ENCODE measurements at regions of chr2 and their contacts with region 1.

Region 1: DNA sequence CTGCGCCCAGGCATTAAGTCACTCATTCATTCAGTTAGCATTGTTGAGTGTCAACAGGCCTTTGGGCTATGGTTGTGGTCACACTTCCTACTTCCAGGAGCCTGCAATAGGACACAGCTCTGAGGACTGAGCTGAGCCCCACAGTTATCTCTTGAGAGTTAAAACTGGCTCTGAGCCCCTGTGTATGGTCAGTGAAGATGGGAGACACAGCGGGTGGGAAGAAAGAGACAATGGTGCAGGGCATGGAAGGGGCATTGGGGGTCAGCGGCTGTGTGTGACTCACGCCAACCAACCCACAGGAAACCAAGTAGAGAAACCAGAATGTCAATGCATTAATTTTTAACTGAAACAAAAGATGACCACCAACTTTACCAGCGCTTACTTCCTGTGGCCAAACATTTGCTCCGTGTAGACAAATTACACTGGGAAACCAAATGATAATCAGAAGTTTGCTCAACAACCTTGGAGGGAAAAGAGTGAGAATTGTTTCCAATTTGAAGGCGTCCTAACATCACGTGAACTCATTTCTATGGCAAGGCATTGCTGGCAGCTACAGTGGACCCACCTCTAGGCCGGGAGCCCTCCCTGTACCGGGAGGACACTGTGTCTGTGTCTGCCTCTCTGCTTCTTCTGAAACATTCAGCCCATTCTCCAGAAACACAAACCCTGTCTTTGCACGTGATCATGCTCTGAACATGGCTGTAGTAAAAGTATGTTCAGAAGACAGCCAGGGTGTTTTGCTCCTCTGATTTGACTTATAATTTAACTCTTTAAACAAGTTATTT is 212.0 kb upstream of the ID2 start:
- DNase-seq: no peak
- H3K4me3 ChIP-seq: no peak overlapping the region
- H3K4me3 Mint-ChIP-seq: peak overlapping the region in 4 of 7 donors; percentile 12 to 51 (median 40)
- H3K27ac ChIP-seq: no peak overlapping the region
- H3K27ac Mint-ChIP-seq: peak overlapping the region in 6 of 8 donors; percentile 43 to 94 (median 84)
- H3K4me1 ChIP-seq: peaks cover 28% of the 10 kb centered on the region
- H3K4me1 Mint-ChIP-seq: peaks cover 57 to 67% (median 61%) of the 10 kb centered on the region in 3 donors
- H3K27me3 ChIP-seq: no peaks in the 10 kb centered on the region
- H3K27me3 Mint-ChIP-seq: peaks cover 0 to 2% of the 10 kb centered on the region in 2 donors

Region 2: DNA sequence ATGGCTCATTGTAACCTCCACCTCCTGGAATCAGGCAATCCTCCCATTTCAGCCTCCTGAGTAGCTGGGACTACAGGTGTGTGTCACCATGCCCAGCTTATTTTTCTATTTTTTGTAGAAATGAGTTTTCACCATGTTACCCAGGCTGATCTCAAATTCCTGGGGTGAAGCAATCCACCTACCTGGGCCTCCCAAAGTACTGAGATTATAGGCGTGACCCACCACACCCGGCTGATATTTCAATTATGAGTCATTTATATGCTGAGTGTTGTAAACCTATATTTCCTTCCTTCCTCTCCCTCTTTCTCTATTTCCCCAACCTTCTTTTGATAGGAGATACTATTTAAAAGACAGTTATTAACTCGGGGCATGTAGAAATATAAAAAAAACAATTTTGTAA is 257.7 kb before region 1 on chr2:
- CTCF ChIA-PET with region 1: no interaction called
- POLR2A ChIA-PET with region 1: interaction called, 10 read pairs
- DNase-seq: no peak
- H3K4me3 ChIP-seq: no peak overlapping the region
- H3K4me3 Mint-ChIP-seq: no peak overlapping the region
- H3K27ac ChIP-seq: no peak overlapping the region
- H3K27ac Mint-ChIP-seq: peak overlapping the region in 1 of 8 donors; percentile 32
- H3K4me1 ChIP-seq: no peaks in the 10 kb centered on the region
- H3K4me1 Mint-ChIP-seq: peaks cover 0 to 6% (median 4%) of the 10 kb centered on the region in 3 donors
- H3K27me3 ChIP-seq: no peaks in the 10 kb centered on the region
- H3K27me3 Mint-ChIP-seq: no peaks in the 10 kb centered on the region

Region 3: DNA sequence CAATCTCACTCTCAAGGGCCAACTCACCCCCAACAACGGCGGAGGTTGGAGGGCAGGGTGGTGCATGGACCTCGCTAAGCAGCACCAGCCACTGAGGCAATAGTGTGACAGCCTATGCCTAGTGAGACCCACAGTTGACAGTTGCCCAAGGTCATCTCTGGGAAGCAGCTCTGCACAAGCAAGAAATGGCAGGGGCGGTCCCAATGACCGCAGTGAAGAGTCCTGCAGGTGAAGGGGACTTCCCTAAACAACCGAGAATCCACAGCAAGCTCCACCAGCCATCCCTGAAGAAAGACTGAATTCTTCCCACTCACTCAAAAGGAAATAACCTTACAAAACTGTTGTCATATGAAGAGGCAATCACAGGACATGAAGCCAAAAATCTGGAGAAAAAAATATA is 101.4 kb before region 1 on chr2:
- CTCF ChIA-PET with region 1: no interaction called
- POLR2A ChIA-PET with region 1: no interaction called
- DNase-seq: no peak
- H3K4me3 ChIP-seq: no peak overlapping the region
- H3K4me3 Mint-ChIP-seq: no peak overlapping the region
- H3K27ac ChIP-seq: no peak overlapping the region
- H3K27ac Mint-ChIP-seq: no peak overlapping the region
- H3K4me1 ChIP-seq: no peaks in the 10 kb centered on the region
- H3K4me1 Mint-ChIP-seq: peaks cover 0 to 8% (median 5%) of the 10 kb centered on the region in 3 donors
- H3K27me3 ChIP-seq: no peaks in the 10 kb centered on the region
- H3K27me3 Mint-ChIP-seq: peaks cover 0 to 4% of the 10 kb centered on the region in 2 donors

Region 4: GRCh38 chr2:8456151-8456845 is 13.6 kb before region 1 on chr2:
- CTCF ChIA-PET with region 1: no interaction called
- POLR2A ChIA-PET with region 1: no interaction called
- DNase-seq: peak; percentile 27 to 59 (median 54)
- H3K4me3 ChIP-seq: peak overlapping the region; percentile 52
- H3K4me3 Mint-ChIP-seq: peak overlapping the region; percentile 81 to 92 (median 89)
- H3K27ac ChIP-seq: no peak overlapping the region
- H3K27ac Mint-ChIP-seq: peak overlapping the region; percentile 84 to 99 (median 98)
- H3K4me1 ChIP-seq: peaks cover 20% of the 10 kb centered on the region
- H3K4me1 Mint-ChIP-seq: peaks cover 38 to 47% (median 44%) of the 10 kb centered on the region in 3 donors
- H3K27me3 ChIP-seq: no peaks in the 10 kb centered on the region
- H3K27me3 Mint-ChIP-seq: peaks cover 0 to 2% of the 10 kb centered on the region in 2 donors

Measured in CD8-positive, alpha-beta memory T cell (primary cell).